Upper lobe of right lung (tissue), 1 donor: ENCODE measurements at regions of chr12 and their contacts with region 1.

Region 1: GRCh38 chr12:29088611-29089219 is 60.4 kb upstream of the FAR2 start:
- DNase-seq: no peak
- ATAC-seq: no peak
- H3K4me3 ChIP-seq: no peak overlapping the region
- H3K27ac ChIP-seq: no peak overlapping the region
- H3K4me1 ChIP-seq: no peaks in the 10 kb centered on the region
- H3K27me3 ChIP-seq: no peaks in the 10 kb centered on the region
- CTCF ChIP-seq: peak; percentile 45

Region 2: GRCh38 chr12:29317556-29318363 is 229.0 kb after region 1 on chr12:
- intact Hi-C with region 1: loop called (anchors 10 kb)
- DNase-seq: no peak
- ATAC-seq: peak; percentile 98
- H3K4me3 ChIP-seq: no peak overlapping the region
- H3K27ac ChIP-seq: no peak overlapping the region
- H3K4me1 ChIP-seq: no peaks in the 10 kb centered on the region
- H3K27me3 ChIP-seq: no peaks in the 10 kb centered on the region
- CTCF ChIP-seq: peak; percentile 76